AG04449 (cell line): ENCODE measurements at regions of chr12 and their contacts with region 1.

Region 1: DNA sequence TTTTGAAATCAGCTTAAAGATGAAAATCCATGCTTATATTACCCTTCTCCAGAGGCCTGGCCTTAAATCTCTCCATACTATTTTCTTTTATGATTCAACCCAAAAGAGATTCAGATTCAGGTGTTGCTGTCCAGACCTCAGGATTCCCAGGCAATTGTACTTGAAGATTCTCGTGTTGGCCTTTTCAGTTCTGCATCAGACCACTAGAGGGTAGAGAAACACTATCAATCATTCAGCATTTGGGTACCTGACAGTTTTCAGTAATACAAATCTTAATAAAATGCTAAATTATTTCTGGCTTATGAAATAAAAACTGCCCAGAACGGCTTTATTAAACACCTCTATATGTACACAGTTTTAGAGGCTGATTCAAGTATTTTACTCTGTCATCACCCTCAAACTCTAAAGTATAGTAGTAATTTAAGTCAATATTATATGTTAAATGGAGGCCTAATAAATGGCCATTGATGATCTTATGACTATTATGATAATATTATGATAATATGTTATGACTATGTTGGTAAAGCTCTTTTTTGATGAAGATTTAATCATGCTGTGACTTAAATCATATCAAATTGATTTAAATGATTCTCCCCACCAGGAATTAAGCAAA is 301.1 kb downstream of the DUSP6 start:
- DNase-seq: no peak
- H3K4me3 ChIP-seq: no peak overlapping the region
- CTCF ChIP-seq: peak; percentile 70

Region 2: DNA sequence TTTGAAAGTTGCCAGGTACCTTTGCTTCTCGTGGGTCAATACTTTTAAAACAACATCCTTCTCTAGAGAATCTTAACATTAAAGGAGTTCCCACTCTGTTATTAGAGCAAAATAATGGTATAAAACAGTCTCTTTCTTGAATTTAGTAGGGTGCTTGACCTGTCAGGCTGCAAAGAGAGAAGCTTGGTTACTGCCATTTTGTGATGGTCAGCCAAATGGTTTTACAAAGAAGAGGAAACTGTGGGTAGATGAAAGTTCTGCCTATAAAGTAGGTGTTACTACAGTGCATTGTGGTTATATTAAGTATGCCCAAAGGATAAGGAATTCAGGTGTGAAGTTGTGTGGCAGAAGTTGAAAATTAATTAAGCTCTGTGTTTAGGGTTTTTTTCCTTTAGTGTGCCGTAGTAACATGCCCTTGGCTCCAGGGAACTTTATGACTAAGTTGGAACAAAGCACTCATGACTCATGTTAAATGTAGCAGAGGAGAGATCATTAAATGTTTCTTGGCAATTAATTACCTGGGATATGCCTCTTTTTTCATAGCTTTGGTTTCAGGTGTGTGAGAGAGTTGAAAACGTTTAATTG is 116.9 kb before region 1 on chr12:
- CTCF ChIA-PET with region 1: no interaction called
- POLR2A ChIA-PET with region 1: no interaction called
- DNase-seq: no peak
- H3K4me3 ChIP-seq: no peak overlapping the region
- CTCF ChIP-seq: no peak

Region 3: GRCh38 chr12:89029961-89030360 is 21.2 kb before region 1 on chr12:
- CTCF ChIA-PET with region 1: interaction called, 10 read pairs
- POLR2A ChIA-PET with region 1: no interaction called
- DNase-seq: no peak
- H3K4me3 ChIP-seq: no peak overlapping the region
- CTCF ChIP-seq: no peak

Region 4: GRCh38 chr12:89064780-89065179 is 13.6 kb after region 1 on chr12:
- CTCF ChIA-PET with region 1: interaction called, 20 read pairs
- POLR2A ChIA-PET with region 1: no interaction called
- DNase-seq: no peak
- H3K4me3 ChIP-seq: no peak overlapping the region
- CTCF ChIP-seq: no peak

Region 5: DNA sequence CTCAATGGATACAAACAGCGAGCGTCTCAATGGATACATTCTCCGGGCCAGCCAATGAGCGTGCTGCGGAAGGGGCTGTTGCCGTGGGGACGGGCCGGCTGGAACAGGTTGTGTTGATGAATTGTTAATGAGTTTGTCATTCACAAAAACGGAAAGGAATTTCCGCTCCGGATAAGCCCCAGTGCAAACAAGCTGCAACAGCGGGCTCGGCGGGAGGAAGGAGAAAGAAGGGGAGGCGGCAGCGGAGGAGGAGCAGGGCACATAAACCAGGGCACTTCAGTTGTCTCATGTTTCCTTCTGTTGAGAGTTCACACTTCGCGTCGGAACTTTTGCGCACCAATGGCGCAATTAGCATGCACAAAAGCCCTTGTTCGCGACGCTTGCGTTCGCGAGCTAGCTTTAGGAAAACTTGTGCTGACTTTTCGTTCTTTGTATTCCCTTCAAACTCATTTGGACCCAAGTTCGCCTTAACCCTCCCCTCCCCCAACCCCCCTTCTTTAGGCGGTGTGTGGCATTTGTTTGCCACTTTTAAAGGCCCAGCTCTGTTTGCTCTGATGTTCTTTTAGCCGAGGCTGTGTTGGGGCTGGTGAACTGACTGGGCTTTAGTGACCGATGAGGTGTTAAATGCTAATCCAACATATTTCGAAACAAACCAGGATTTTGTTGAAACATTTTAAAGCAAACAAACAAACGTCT is 301.5 kb after region 1 on chr12 and contains the start of gene DUSP6:
- CTCF ChIA-PET with region 1: interaction called, 20 read pairs
- POLR2A ChIA-PET with region 1: no interaction called
- DNase-seq: peak; percentile 96
- H3K4me3 ChIP-seq: peak within 1 kb of the TSS; percentile 88
- CTCF ChIP-seq: no peak

Region 6: GRCh38 chr12:89451841-89452251 is 400.7 kb after region 1 on chr12:
- CTCF ChIA-PET with region 1: interaction called, 11 read pairs
- POLR2A ChIA-PET with region 1: no interaction called
- DNase-seq: peak; percentile 62
- H3K4me3 ChIP-seq: no peak overlapping the region
- CTCF ChIP-seq: no peak